Activated CD8-positive, alpha-beta T cell treated with anti-CD3 and anti-CD28 coated beads, Interleukin-2, amount 10 ng/mL, durations not matched to agents 7 days and 5 days (primary cell): ENCODE measurements at regions of chr9 and their contacts with region 1.

Region 1: DNA sequence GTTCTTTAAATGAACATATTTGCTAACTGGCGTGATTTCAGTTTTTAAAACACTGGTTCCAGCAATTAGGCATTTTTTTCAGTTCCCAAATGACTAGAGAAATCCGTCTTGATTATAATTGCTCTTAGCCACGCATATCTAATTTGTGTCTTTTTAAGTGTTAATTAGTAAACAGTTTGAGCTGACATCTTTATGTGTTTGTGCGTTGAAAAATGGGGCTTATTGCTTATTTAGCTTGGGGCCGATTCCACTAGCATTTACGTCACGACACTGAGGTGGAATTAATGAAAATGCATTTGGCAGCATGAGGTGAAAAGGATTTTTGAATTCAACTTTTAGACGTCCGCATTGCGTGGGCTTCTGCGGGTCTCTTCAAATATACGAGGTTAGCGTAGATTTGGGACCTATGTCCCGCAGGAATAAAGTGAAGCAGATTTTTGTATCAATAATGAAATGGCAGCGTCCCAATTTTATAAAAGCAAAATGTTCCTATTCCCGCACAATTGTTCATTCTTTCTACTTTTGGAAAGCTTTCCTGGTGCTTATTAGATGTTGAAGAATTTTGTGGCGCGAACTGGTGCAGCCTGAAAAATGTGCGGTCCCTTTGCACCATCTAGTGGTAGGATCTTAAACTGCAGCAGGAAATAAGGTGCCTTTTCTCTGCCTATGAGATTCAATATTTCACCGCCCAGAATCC is 122.7 kb upstream of the LMX1B start:
- DNase-seq: peak; percentile 74
- ATAC-seq: peak; percentile 53
- H3K4me3 Mint-ChIP-seq: no peak overlapping the region
- H3K27ac Mint-ChIP-seq: no peak overlapping the region
- H3K4me1 Mint-ChIP-seq: peaks cover 22% of the 10 kb centered on the region
- H3K27me3 Mint-ChIP-seq: no peaks in the 10 kb centered on the region

Region 2: DNA sequence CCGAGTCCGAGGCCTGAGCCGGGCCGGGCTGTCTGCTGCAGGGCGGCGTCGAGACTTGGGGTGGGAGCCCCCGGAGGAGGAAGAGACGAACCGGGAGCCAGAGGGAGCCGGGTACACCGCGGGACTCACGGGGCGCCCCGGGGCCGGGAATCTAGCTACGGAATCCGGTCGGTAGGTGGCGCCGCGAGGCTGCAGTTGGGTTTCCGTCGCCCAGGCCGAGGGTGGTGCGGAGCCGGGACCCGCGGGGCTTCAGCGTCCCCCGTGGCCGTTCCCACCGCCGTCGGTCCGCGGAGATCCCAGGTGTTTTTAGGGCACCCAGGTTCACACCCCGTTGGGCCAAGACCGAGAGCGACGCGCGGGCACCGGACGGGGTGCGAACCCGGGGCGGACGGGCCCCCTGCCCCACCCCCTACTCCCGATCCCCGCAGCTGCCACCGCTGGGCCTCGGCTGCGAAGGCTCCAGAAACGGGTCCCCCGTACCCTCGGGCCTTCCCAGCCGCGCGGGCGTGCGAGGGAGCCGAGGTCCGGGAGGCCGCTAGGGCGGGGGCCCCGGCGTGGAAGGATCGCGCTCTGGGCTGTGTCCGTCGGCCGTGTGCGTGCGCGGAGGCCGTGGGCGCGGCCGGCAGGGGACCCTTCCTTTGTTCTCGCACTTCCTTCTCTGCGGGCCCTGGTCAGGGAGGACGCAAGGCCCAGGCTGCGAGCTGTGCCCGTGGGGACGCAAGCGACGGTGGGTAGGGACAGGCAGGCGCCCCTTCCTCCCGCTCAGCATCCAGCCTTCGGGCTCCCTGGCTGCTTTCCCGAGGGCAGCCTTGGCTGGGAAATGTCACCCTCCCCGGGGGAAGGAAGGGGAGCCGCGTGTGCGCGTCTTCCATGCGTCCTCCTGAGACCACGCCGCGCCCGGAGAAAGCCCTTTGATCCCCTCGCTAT is 1082.8 kb before region 1 on chr9:
- CTCF ChIA-PET with region 1: interaction called, 22 read pairs
- POLR2A ChIA-PET with region 1: no interaction called
- DNase-seq: peak; percentile 82
- ATAC-seq: peak; percentile 92
- H3K4me3 Mint-ChIP-seq: peak overlapping the region; percentile 65
- H3K27ac Mint-ChIP-seq: no peak overlapping the region
- H3K4me1 Mint-ChIP-seq: peaks cover 16% of the 10 kb centered on the region
- H3K27me3 Mint-ChIP-seq: peaks cover 14% of the 10 kb centered on the region

Region 3: DNA sequence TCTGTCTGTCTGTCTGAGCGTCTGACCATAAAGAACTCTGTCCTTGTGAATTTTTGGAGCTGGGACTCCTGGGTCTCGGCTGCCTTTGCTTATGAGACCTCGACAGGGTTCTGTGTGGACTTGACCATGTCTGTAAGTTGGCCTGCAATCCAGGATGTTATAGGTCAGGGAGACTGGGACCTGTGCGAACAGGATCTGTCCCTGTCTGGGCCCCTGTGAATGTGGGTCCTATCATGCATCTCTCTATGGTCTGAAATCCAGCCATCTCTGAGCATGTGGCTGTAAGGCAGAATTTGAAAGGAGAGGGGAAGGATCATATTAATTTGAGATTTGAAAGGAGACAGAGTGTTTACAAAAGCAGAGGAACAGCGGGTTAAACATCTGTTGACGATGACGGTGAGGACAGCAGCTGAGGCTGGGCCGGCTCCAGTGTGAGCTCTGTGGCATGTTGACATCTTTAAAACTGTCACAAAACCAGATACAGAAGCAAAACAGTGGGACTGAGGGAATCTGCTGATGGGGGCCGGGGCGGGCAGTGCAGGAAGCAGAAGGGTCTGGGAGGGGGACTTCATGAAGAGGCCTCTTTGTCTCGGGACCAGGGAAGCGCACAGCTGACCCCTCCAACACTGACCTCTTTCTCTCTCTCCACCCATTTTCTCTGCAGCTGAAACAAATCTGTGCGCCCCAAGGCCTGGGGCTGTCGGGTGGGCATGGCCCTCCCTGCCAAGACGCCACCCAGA is 183.5 kb before region 1 on chr9:
- CTCF ChIA-PET with region 1: interaction called, 56 read pairs
- POLR2A ChIA-PET with region 1: no interaction called
- DNase-seq: peak; percentile 4
- ATAC-seq: no peak
- H3K4me3 Mint-ChIP-seq: no peak overlapping the region
- H3K27ac Mint-ChIP-seq: no peak overlapping the region
- H3K4me1 Mint-ChIP-seq: peaks cover 9% of the 10 kb centered on the region
- H3K27me3 Mint-ChIP-seq: peaks cover 6% of the 10 kb centered on the region

Region 4: DNA sequence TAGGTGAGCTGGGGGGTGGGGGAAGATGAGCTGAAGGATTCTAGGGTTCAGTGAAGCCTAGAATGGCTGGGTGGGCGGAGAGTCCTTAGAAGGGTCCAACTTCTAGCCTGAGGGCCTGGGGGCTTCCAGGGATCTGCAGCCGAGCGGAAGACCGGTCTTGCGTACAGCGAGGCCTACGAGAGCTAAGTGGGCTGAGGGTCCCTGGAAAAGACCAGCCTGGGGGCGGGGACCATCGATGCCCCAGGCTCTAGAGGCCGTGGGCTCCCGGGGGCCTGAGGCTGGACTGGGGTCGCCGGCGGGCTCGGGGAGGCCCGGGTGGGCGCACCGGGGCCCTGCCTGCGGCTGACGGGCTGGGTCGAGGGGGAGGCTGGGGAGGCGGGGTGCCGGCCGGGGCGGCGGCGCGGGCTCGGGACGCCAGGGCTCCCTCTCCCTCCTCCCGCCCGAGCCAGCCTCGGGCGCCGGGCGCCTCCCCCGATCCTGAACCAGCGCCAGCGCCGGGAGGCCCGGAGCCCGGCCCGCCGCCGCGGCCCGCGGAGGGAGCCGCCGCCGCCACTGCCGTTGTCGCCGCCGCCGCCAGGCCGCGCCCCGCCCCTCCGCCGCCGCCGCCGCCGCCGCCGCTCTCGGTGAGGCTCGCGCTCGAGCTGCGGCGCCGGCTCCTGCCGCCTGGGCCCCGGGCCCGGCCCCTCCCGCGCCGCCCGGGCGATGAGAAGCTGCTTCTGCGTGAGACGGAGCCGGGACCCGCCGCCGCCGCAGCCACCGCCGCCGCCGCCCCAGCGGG is 164.6 kb before region 1 on chr9 and contains the start of gene MVB12B:
- CTCF ChIA-PET with region 1: interaction called, 19 read pairs
- POLR2A ChIA-PET with region 1: no interaction called
- DNase-seq: peak; percentile 40
- ATAC-seq: peak; percentile 66
- H3K4me3 Mint-ChIP-seq: peak within 1 kb of the TSS; percentile 77
- H3K27ac Mint-ChIP-seq: peak within 1 kb of the TSS; percentile 83
- H3K4me1 Mint-ChIP-seq: peaks cover 49% of the 10 kb centered on the region
- H3K27me3 Mint-ChIP-seq: peaks cover 2% of the 10 kb centered on the region
- total RNA-seq, gene MVB12B: 17.4 to 19.9 TPM

Region 5: DNA sequence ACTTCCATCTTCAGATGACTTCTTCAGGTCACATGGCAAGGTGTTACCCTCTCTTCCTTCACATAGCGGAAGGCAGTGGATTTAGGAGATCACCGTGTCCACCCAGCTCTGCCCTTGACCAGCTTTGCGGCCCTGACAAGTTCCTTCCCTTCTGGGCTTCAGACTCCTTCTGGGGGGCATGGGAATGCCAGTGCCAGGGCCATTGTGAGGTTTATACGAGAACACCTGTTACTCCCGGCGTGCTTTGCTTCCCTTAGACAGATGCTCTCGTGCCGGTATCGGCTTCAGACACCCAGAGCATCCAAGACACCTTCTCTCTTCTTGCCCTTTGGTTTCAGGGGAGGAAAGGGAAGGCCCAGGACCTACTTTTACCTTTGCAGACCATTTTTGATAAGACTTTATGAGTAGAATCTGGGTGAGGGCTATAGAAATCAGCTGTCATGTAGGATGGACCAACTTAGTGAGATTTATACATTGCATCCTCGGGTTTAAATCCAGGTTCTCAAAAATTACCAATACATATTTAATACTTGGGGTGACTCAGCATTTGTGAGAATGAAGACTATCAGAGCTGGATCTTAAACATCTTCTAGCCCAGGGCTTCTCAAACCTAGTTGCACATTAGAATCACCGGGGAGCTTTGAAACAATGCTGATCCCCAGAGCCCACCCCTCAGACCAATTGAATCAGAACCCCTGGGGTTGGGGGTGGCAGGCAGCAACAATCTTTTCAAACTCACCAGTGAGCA is 26.2 kb before region 1 on chr9:
- CTCF ChIA-PET with region 1: interaction called, 67 read pairs
- POLR2A ChIA-PET with region 1: no interaction called
- DNase-seq: no peak
- ATAC-seq: no peak
- H3K4me3 Mint-ChIP-seq: no peak overlapping the region
- H3K27ac Mint-ChIP-seq: no peak overlapping the region
- H3K4me1 Mint-ChIP-seq: peaks cover 46% of the 10 kb centered on the region
- H3K27me3 Mint-ChIP-seq: no peaks in the 10 kb centered on the region

Region 6: GRCh38 chr9:126536841-126537465 is 45.9 kb after region 1 on chr9:
- CTCF ChIA-PET with region 1: no interaction called
- POLR2A ChIA-PET with region 1: no interaction called
- DNase-seq: no peak
- ATAC-seq: no peak
- H3K4me3 Mint-ChIP-seq: no peak overlapping the region
- H3K27ac Mint-ChIP-seq: no peak overlapping the region
- H3K4me1 Mint-ChIP-seq: no peaks in the 10 kb centered on the region
- H3K27me3 Mint-ChIP-seq: peaks cover 10% of the 10 kb centered on the region

Region 7: DNA sequence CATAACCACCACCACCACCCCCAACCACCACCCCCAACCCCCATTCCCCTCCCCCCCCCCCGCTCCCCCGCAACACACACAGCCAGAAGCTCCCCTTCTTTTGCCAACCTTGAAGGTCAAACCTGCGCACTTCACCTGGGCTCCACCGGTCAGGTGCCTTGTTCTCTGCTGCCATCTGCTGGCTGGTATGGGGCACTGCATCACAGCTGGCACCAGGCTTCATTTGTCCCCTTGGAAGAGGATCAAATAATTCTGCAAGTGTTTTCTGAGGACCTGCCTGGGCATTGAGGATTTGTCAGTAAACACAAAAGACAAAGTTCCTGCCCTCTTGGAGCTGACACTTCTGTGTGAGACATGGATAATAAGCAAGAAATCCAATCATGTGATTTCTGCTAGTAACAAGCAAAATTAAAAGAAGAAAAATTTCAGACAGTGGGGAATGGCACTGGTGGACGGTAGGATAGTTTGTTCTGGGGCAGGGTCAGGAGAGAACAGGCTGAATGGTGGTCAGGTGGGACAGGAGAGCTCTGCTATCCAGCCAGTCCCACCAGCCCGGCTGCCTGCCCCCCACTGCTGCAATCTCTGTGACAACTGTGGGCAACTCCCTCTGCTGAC is 67.1 kb after region 1 on chr9:
- CTCF ChIA-PET with region 1: interaction called, 16 read pairs
- POLR2A ChIA-PET with region 1: no interaction called
- DNase-seq: peak; percentile 81
- ATAC-seq: peak; percentile 90
- H3K4me3 Mint-ChIP-seq: no peak overlapping the region
- H3K27ac Mint-ChIP-seq: no peak overlapping the region
- H3K4me1 Mint-ChIP-seq: no peaks in the 10 kb centered on the region
- H3K27me3 Mint-ChIP-seq: peaks cover 25% of the 10 kb centered on the region